Activated CD8-positive, alpha-beta memory T cell treated with anti-CD3 and anti-CD28 coated beads, Interleukin-2, amount 10 ng/mL, durations not matched to agents 7 days and 5 days (primary cell): ENCODE measurements at regions of chr9 and their contacts with region 1.

Region 1: DNA sequence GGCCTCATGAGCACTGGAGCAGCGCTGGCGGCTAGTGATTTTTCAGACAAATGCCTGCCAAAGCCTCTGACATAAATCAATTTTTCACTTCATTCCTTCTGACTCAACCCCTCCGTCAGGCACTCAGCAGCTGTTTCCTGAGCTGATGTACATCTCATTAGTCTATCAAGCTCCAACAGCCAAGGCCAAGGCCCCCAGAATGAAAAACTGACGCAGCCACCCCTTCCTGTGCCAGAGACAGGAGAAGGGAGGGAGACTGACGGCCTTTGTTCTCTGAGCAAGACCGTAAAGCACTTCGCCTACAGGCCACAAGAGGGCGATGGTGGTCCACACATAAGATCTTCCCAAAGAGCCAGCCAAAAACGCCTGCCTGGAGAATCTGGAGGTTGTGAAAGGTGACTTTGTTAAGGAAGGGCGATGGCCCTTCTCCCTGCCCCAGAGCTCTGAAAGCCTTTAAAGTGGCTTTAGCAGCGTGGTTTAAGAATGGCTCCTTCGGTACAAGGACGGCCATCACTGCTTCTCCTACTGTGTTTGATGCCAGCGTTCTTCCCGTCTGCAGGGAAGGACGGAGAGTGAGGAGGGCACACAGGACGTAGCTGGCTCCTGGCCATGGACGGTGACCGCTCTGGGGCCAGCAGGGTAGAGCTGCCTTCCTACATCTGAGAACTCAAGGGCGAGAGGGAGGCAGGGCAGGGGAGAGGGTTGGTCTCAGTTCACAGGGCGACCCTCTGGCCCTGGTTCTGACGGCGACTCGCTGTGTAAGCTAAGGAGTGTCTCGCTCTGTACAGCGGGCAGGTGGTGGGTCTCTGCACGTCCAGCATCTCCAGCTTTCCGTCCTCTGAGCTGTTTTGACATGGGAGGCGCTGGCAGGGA is 37.0 kb downstream of the ALG2 start:
- DNase-seq: peak; percentile 89
- ATAC-seq: peak; percentile 81
- H3K4me3 Mint-ChIP-seq: no peak overlapping the region
- H3K27ac Mint-ChIP-seq: peak overlapping the region; percentile 88
- H3K4me1 Mint-ChIP-seq: peaks cover 60% of the 10 kb centered on the region
- H3K27me3 Mint-ChIP-seq: no peaks in the 10 kb centered on the region

Region 2: GRCh38 chr9:99130069-99130468 is 54.6 kb before region 1 on chr9:
- CTCF ChIA-PET with region 1: no interaction called
- DNase-seq: no peak
- ATAC-seq: no peak
- H3K4me3 Mint-ChIP-seq: no peak overlapping the region
- H3K27ac Mint-ChIP-seq: no peak overlapping the region
- H3K4me1 Mint-ChIP-seq: peaks cover 70% of the 10 kb centered on the region
- H3K27me3 Mint-ChIP-seq: no peaks in the 10 kb centered on the region

Region 3: DNA sequence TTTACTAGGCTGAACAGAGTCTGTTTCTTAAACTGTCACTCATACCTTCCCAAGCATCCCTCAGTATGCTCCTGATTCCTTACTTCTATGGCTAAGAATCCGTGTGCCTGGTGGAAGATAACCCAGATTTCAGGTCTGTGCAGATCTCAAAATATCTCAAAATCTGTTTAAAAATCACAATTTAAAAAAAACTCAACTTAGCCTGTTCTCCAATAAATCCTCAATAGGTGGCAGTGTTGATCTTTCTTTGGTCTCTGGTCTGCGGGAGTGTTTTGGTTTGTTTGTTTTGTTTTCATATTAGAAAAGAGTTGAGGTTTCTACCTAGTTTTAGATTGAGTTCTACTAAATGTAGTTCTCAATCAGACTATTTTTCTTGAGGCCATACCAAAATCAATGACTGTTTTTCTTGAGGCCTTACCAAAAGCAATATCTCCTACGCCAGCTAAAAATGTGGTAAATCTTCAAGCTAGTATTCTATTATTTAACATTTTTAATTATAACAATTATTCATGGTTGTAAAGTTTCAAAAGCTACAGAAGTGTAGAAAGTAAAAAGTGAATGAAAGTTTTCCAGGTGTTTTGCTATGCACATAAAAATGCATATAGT is 21.8 kb before region 1 on chr9:
- CTCF ChIA-PET with region 1: interaction called, 38 read pairs
- DNase-seq: no peak
- ATAC-seq: peak; percentile 40
- H3K4me3 Mint-ChIP-seq: no peak overlapping the region
- H3K27ac Mint-ChIP-seq: no peak overlapping the region
- H3K4me1 Mint-ChIP-seq: peaks cover 53% of the 10 kb centered on the region
- H3K27me3 Mint-ChIP-seq: peaks cover 8% of the 10 kb centered on the region

Region 4: GRCh38 chr9:99173570-99174504 is 10.9 kb before region 1 on chr9:
- CTCF ChIA-PET with region 1: interaction called, 12 read pairs
- DNase-seq: no peak
- ATAC-seq: peak; percentile 57
- H3K4me3 Mint-ChIP-seq: no peak overlapping the region
- H3K27ac Mint-ChIP-seq: no peak overlapping the region
- H3K4me1 Mint-ChIP-seq: peaks cover 33% of the 10 kb centered on the region
- H3K27me3 Mint-ChIP-seq: no peaks in the 10 kb centered on the region

Region 5: DNA sequence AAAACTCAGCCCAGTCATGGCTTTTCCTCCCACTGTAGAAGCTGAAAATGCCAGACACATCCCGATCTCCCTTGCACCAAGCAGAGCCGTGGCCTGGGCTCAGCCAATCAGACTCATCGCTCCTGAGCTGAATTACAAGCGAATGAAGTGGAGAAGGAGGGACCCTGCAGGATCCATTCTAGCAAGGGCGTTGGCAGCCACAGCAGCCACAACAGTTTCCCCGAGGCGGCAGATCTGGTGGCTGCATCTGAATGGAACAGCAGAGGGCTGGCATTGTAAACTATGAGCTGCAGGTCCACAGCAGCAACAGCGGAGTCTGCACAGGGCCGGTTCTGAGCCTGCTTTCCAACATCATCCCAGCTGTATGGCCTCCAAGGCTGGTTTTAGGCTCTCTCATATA is 13.3 kb after region 1 on chr9:
- CTCF ChIA-PET with region 1: interaction called, 20 read pairs
- DNase-seq: no peak
- ATAC-seq: no peak
- H3K4me3 Mint-ChIP-seq: no peak overlapping the region
- H3K27ac Mint-ChIP-seq: no peak overlapping the region
- H3K4me1 Mint-ChIP-seq: peaks cover 26% of the 10 kb centered on the region
- H3K27me3 Mint-ChIP-seq: peaks cover 6% of the 10 kb centered on the region

Region 6: GRCh38 chr9:99221621-99222415 is 37.1 kb after region 1 on chr9 and contains the starts of genes ALG2 and SEC61B:
- CTCF ChIA-PET with region 1: interaction called, 21 read pairs
- DNase-seq: peak; percentile 96
- ATAC-seq: peak; percentile 92
- H3K4me3 Mint-ChIP-seq: peak within 1 kb of the TSS; percentile 99
- H3K27ac Mint-ChIP-seq: peak within 1 kb of the TSS; percentile 99
- H3K4me1 Mint-ChIP-seq: peaks cover 52% of the 10 kb centered on the region
- H3K27me3 Mint-ChIP-seq: no peaks in the 10 kb centered on the region
- total RNA-seq, gene ALG2: 20.2 to 35.4 TPM
- total RNA-seq, gene SEC61B: 101 to 154 TPM

Region 7: DNA sequence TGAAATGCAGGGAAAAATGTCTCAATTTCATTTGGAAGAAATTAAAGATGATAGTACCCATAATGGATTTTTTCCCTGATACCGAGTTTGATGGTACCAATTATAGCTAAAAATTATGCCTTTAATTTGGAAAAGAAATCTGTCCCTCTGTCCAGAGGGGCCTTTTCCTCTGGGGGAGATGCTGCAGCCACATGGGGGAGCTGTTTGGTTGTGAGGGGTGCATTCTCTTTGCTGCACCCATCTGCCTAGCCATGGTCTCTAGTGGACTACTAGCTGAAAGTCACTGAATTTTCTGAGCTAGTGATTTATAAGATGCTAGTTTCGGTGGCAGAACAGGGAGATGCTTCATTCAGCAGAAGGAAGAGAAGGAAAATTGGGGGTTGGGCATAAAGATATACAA is 47.0 kb after region 1 on chr9:
- CTCF ChIA-PET with region 1: interaction called, 26 read pairs
- DNase-seq: peak; percentile 66
- ATAC-seq: peak; percentile 63
- H3K4me3 Mint-ChIP-seq: no peak overlapping the region
- H3K27ac Mint-ChIP-seq: no peak overlapping the region
- H3K4me1 Mint-ChIP-seq: peaks cover 20% of the 10 kb centered on the region
- H3K27me3 Mint-ChIP-seq: no peaks in the 10 kb centered on the region